Activated CD8-positive, alpha-beta T cell treated with anti-CD3 and anti-CD28 coated beads for 36 hours (primary cell): ENCODE measurements at regions of chr2 and their contacts with region 1.

Region 1: GRCh38 chr2:86221066-86221684 is 21.9 kb downstream of the MRPL35 start:
- DNase-seq: peak; percentile 76
- ATAC-seq: peak; percentile 79
- H3K4me3 Mint-ChIP-seq: no peak overlapping the region
- H3K27ac Mint-ChIP-seq: no peak overlapping the region
- H3K4me1 Mint-ChIP-seq: peaks cover 28% of the 10 kb centered on the region
- H3K27me3 Mint-ChIP-seq: no peaks in the 10 kb centered on the region
- CTCF ChIP-seq: peak; percentile 81

Region 2: GRCh38 chr2:85911814-85912692 is 309.1 kb before region 1 on chr2:
- CTCF ChIA-PET with region 1: no interaction called
- POLR2A ChIA-PET with region 1: no interaction called
- intact Hi-C with region 1: no loop called
- DNase-seq: peak; percentile 30
- ATAC-seq: no peak
- H3K4me3 Mint-ChIP-seq: no peak overlapping the region
- H3K27ac Mint-ChIP-seq: no peak overlapping the region
- H3K4me1 Mint-ChIP-seq: peaks cover 7% of the 10 kb centered on the region
- H3K27me3 Mint-ChIP-seq: no peaks in the 10 kb centered on the region
- CTCF ChIP-seq: no peak

Region 3: GRCh38 chr2:86201671-86202335 is 19.4 kb before region 1 on chr2:
- CTCF ChIA-PET with region 1: interaction called, 25 read pairs
- POLR2A ChIA-PET with region 1: interaction called, 5 read pairs
- intact Hi-C with region 1: no loop called
- DNase-seq: no peak
- ATAC-seq: no peak
- H3K4me3 Mint-ChIP-seq: no peak overlapping the region
- H3K27ac Mint-ChIP-seq: no peak overlapping the region
- H3K4me1 Mint-ChIP-seq: peaks cover 33% of the 10 kb centered on the region
- H3K27me3 Mint-ChIP-seq: no peaks in the 10 kb centered on the region
- CTCF ChIP-seq: no peak

Region 4: DNA sequence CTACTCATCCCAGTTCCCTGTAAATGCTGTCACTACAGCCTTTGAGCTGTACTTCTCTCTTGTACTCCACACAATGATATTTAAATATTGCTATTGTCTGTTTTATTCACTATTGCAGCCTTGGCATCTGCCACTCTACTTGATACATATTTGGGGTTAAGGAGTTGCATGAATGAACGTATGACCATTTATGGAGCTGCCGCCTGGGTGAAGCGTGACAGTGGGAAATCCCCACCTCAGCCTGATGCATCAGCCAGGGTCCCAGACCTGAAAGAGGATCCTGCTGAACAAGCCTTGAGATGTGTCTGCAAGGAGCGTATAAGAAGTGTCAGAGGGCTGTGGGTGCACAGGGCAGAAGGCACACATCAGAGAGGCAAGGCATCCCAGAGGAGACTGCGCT is 17.2 kb after region 1 on chr2:
- CTCF ChIA-PET with region 1: interaction called, 19 read pairs
- POLR2A ChIA-PET with region 1: no interaction called
- intact Hi-C with region 1: no loop called
- DNase-seq: peak; percentile 73
- ATAC-seq: peak; percentile 94
- H3K4me3 Mint-ChIP-seq: no peak overlapping the region
- H3K27ac Mint-ChIP-seq: no peak overlapping the region
- H3K4me1 Mint-ChIP-seq: peaks cover 6% of the 10 kb centered on the region
- H3K27me3 Mint-ChIP-seq: peaks cover 3% of the 10 kb centered on the region
- CTCF ChIP-seq: no peak

Region 5: GRCh38 chr2:86274265-86274917 is 53.2 kb after region 1 on chr2:
- CTCF ChIA-PET with region 1: interaction called, 10 read pairs
- POLR2A ChIA-PET with region 1: no interaction called
- intact Hi-C with region 1: no loop called
- DNase-seq: peak; percentile 27
- ATAC-seq: peak; percentile 87
- H3K4me3 Mint-ChIP-seq: no peak overlapping the region
- H3K27ac Mint-ChIP-seq: peak overlapping the region; percentile 44
- H3K4me1 Mint-ChIP-seq: peaks cover 21% of the 10 kb centered on the region
- H3K27me3 Mint-ChIP-seq: peaks cover 7% of the 10 kb centered on the region
- CTCF ChIP-seq: no peak

Region 6: GRCh38 chr2:86298411-86299379 is 77.5 kb after region 1 on chr2:
- CTCF ChIA-PET with region 1: interaction called, 16 read pairs
- POLR2A ChIA-PET with region 1: no interaction called
- intact Hi-C with region 1: no loop called
- DNase-seq: no peak
- ATAC-seq: no peak
- H3K4me3 Mint-ChIP-seq: no peak overlapping the region
- H3K27ac Mint-ChIP-seq: no peak overlapping the region
- H3K4me1 Mint-ChIP-seq: no peaks in the 10 kb centered on the region
- H3K27me3 Mint-ChIP-seq: peaks cover 16% of the 10 kb centered on the region
- CTCF ChIP-seq: no peak

Region 7: GRCh38 chr2:86368161-86368824 is 147.1 kb after region 1 on chr2:
- CTCF ChIA-PET with region 1: interaction called, 25 read pairs
- POLR2A ChIA-PET with region 1: no interaction called
- intact Hi-C with region 1: loop called (anchors 5 kb)
- DNase-seq: peak; percentile 48
- ATAC-seq: peak; percentile 83
- H3K4me3 Mint-ChIP-seq: peak overlapping the region; percentile 50
- H3K27ac Mint-ChIP-seq: peak overlapping the region; percentile 14
- H3K4me1 Mint-ChIP-seq: peaks cover 27% of the 10 kb centered on the region
- H3K27me3 Mint-ChIP-seq: no peaks in the 10 kb centered on the region
- CTCF ChIP-seq: peak; percentile 72

Region 8: GRCh38 chr2:86440631-86441391 is 219.6 kb after region 1 on chr2 and contains the start of gene KDM3A:
- CTCF ChIA-PET with region 1: interaction called, 10 read pairs
- POLR2A ChIA-PET with region 1: interaction called, 3 read pairs
- intact Hi-C with region 1: no loop called
- DNase-seq: peak; percentile 100
- ATAC-seq: peak; percentile 84
- H3K4me3 Mint-ChIP-seq: peak within 1 kb of the TSS; percentile 94
- H3K27ac Mint-ChIP-seq: peak within 1 kb of the TSS; percentile 100
- H3K4me1 Mint-ChIP-seq: peaks cover 39% of the 10 kb centered on the region
- H3K27me3 Mint-ChIP-seq: no peaks in the 10 kb centered on the region
- CTCF ChIP-seq: no peak
- total RNA-seq, gene KDM3A: 107 to 114 TPM